GM18951 (cell line): ENCODE measurements at regions of chr11 and their contacts with region 1.

Region 1: GRCh38 chr11:72831513-72832300 is 17.5 kb downstream of the ATG16L2 start:
- POLR2A ChIP-seq: peak; percentile 29

Region 2: DNA sequence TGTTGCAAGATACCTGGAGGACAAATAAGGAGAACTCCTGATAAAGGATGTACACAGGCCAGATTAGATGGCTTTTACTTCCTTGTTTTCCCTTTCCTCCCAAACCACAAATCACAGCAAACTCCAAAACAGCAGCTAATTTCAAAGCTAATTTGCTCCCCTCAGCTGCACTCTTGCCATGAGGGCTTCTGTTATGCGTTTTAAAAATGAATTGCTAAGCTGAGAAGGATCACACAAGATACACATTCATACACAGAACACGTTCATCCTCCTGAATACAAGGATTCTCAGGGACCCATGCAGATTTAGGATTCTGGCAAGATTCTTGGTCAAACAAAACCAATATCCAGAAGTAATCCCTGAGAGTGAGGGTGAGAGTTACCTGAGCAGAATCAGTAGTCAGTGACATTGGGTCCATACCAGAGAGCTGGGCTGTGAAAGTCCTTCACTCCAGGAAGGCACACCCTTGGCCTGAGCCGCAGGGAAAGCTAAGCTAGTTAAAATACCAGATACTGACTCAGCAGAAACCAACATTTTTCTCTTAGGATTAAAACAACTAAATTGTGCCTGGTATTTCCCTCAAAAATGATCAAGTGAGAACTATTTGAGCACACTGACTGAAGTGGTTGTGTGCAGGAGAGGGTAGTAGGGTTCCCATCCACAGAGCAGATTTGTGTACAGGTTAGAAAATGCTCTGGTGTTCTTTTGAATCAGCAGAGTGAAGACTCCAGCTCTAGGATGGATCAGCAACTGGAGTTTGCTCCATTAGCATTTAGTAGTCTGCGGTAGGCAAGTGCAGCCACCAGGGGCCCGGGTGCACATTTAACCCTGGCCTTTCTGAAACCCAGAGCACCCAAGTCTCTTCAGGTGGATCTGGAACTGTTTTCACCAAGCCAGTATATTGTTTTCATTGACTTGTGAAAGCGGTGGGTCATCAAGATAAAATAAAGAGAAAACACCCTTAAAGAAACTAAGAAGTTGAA is 296.9 kb before region 1 on chr11:
- in situ Hi-C with region 1: no loop called
- POLR2A ChIP-seq: no peak

Region 3: DNA sequence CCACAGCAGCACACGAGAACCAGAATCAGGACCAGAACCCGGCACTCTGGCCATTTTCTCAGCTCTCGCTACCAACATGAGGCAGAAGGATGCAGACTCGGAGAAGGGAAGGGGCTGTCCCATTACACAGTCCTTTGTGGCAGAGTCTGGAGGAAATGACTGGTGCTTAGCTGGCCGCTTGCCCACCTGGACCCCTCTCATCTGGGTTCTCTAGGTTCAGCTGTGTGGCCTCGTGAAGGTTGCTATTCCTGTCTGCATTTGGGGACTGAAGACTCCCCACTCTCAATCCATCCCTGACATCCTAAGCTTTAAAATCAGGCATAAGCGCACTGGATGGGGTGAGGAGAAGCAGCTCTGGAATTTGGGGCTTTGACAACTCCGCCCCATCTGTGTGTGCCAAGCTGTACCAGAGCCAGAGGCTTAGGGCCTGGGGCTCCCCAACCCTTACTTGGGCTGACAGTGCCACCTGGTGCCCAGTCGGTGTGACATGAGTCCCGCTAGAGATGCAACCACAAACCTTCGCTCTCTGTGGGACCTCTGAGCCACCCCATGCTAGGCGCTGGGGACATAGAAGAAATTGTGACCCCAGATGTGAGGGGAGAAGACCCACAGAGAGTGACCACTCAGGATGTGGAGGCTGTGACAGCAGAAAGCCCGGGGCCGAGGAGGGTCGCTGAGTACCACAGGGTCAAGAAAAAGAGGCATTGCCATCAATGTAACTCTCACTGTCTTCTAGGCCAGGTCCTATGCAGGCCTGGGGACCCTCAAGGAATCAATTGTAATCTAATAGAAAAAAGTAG is 346.3 kb after region 1 on chr11:
- in situ Hi-C with region 1: loop called (anchors 10 kb)
- POLR2A ChIP-seq: no peak